ENCODE measurements at regions of chr14 and their contacts with region 1.

Region 1: DNA sequence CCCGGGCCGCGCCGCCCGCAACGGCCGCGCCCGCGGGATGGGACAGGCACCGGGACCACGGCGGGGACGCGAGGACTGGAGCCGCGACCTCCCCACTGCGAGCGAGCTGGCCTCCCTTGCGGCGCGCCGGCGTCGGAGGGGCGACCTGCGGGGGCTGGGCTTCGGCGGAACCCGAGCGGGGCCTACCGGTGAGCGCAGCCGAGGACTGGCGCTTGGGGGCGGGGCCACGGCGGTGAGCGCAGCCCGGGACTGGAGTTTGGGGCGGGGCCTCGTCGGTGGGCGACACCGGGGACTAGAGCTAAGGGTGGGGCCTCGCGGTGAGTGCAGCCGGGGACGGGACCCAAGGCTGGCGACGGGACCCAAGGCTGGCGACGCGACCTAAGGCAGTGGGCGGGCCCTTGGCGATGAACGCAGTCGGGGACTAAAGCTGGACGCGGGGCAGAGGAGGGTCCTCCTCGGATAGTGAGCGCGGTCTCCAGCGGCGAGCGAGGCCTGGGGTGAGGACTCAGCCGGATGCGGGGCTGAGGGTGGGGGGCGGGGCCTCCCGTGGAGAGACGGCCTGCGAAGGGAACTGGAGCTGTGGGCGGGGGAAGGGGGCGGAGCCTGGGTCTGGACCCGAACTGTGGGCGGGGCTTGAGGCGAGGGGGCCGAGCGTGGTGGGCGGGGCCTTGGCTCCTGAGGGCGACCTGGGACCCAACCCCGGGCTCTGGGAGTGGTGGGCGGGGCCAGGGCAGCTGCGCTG is at the start of gene BRF1:
- DNase-seq: peak; percentile 84
- H3K4me3 ChIP-seq: peak within 1 kb of the TSS; percentile 92
- H3K27ac ChIP-seq: peak within 1 kb of the TSS; percentile 87
- H3K27me3 ChIP-seq: no peaks in the 10 kb centered on the region
- CTCF ChIP-seq: no peak
- polyA plus RNA-seq, gene BRF1: 6.3 and 8.1 TPM in 2 replicates

Region 2: GRCh38 chr14:104976198-104977007 is 324.6 kb before region 1 on chr14:
- CTCF ChIA-PET with region 1: no interaction called
- POLR2A ChIA-PET with region 1: no interaction called
- DNase-seq: peak; percentile 46
- H3K4me3 ChIP-seq: no peak overlapping the region
- H3K27ac ChIP-seq: no peak overlapping the region
- H3K27me3 ChIP-seq: no peaks in the 10 kb centered on the region
- CTCF ChIP-seq: peak; percentile 92

Region 3: GRCh38 chr14:105275267-105275946 is 25.6 kb before region 1 on chr14:
- CTCF ChIA-PET with region 1: no interaction called
- POLR2A ChIA-PET with region 1: interaction called, 12 read pairs
- DNase-seq: peak; percentile 18
- H3K4me3 ChIP-seq: no peak overlapping the region
- H3K27ac ChIP-seq: peak overlapping the region; percentile 52
- H3K27me3 ChIP-seq: no peaks in the 10 kb centered on the region
- CTCF ChIP-seq: no peak

Region 4: DNA sequence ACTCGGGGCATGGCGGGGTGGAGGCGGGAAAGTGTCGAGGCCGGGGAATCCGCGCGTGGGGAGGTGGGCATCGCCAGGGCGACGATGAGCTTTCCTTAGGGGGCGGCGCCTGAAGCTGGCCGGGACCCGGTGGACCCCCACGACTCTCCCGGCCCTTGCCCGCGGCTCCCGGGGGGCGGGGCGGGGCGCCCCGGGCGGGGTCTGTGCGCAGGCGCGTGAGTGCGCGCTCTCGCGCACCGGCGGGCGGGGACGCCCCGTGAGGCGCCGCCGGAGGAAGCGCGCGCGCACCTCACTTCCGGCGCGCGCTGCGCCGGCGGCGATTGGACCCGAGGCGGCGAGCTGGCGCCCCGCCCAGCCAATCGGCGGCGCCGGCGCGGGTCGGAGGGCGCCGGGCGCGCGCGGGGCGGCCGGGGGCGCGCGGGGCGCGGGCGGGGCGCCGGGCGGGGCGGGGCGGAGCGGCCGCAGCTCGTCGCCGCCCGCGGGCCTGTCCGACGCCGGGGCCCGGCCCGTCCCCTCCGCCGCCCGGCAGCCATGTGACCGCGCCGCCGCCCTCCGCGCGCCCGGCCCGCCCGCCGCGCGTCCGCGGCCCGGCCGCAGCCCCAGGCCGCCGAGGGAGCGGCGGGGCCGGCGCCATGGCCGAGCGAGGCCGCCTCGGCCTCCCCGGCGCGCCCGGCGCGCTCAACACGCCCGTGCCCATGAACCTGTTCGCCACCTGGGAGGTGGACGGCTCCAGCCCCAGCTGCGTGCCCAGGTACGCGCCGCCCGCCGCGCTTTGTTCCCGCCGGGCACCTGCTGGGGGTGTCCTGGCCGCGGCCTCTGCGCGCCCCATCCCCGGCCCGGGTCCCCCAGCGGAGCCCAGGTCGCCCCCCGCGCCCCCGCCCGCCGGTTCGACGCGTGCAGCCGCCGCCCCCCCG is 13.6 kb after region 1 on chr14 and contains the start of gene PACS2:
- CTCF ChIA-PET with region 1: no interaction called
- POLR2A ChIA-PET with region 1: interaction called, 23 read pairs
- DNase-seq: peak; percentile 41
- H3K4me3 ChIP-seq: peak within 1 kb of the TSS; percentile 77
- H3K27ac ChIP-seq: peak within 1 kb of the TSS; percentile 21
- H3K27me3 ChIP-seq: no peaks in the 10 kb centered on the region
- CTCF ChIP-seq: no peak
- polyA plus RNA-seq, gene PACS2: 13.0 and 16.1 TPM in 2 replicates

Region 5: DNA sequence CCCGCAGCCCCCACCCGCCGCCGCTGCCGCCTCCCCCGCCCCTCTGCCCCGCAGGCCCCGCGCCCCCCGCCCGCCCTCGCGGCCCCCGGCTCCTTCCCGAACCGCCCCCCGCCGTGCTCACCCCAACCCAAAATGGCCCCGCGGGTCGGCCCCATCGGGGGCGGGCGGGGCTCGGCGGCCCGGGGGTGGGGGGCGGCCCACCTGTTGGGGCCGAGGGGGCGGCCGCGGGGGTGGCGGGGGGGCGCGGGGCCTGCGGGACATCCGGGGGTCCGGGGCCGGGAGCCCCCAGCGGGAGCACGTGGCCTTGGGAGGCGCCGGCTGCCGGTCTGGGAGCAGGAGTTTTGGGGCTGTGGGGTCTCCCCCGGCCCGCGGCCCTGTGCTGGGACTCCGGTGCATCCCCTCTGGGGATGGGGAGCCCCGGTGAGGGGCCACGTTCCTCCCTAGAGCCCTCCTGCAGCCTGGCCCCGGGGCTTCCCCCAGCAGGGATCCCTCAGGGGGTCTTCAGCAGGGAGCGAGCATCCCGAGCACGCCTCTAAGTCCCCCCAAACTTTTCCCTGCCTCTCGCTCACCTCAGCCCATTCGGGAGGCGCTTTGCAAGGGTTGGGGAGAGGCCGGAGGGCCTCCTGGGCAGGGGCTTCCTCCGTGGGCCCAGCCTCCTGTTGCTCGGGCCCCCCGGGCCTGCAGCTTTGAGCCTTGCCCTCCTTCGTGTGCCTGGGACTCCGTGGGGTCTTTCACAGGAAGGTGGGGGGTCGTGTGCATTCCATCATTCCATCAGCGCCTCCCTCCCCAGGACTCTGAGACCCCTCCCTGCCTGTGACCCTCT is 119.3 kb after region 1 on chr14:
- CTCF ChIA-PET with region 1: no interaction called
- POLR2A ChIA-PET with region 1: no interaction called
- DNase-seq: no peak
- H3K4me3 ChIP-seq: peak overlapping the region; percentile 80
- H3K27ac ChIP-seq: no peak overlapping the region
- H3K27me3 ChIP-seq: no peaks in the 10 kb centered on the region
- CTCF ChIP-seq: no peak

Measured in AG04450 (cell line).